ENCODE measurements at regions of chr14 and their contacts with region 1.

Region 1: DNA sequence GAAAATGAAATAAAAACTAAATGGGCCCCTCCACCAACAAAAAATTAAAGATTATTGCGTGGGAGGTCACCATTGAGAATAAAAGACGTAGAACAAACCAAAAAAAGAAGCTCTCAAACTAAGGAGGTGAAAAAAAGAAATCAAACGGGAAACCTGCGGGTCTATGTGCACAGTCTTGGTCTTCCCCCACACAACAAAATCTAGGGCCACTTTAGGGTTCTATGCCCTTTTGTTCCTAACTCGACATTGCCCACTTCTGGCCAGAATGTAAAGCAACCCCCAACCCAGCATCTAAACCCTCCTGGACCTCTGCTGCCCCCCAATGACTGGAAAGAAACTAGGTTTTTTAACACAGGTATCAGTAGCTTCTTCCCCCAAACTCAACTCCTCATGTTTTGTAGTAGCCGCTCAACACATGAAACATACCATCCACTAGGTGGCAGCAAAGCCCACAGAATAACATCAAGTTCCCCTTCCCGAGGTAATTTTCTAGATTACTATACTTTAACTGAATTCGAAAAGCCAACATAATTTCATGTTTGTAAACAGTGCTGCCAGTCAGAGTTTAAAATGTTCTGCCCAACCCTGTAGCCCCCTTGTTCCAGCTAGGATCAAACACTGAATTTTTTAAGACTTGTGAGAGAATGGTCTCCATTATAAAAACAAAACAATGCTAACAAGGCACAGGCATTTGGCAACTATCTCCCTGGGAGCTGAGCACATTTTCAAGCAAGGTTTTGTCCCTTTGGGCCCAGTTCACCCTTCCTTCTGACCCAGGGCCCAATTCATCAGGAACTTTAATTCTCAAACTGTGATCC is 18.7 kb downstream of the DAD1 start:
- DNase-seq: no peak
- H3K4me3 ChIP-seq: peak overlapping the region in 5 of 8 donors; percentile 4 to 41 (median 15)
- H3K27ac ChIP-seq: peak overlapping the region in 7 of 8 donors; percentile 57 to 96 (median 87)
- H3K4me1 ChIP-seq: peaks cover 19 to 88% (median 59%) of the 10 kb centered on the region in 6 donors
- H3K27me3 ChIP-seq: no peaks in the 10 kb centered on the region
- CTCF ChIP-seq: peak; percentile 90 to 100 (median 95)
- POLR2A ChIP-seq: no peak

Region 2: GRCh38 chr14:22653012-22653621 is 82.8 kb after region 1 on chr14:
- intact Hi-C with region 1: loop called (anchors 2 kb)
- DNase-seq: no peak
- H3K4me3 ChIP-seq: no peak overlapping the region
- H3K27ac ChIP-seq: no peak overlapping the region
- H3K4me1 ChIP-seq: peaks cover 0 to 4% (median 0%) of the 10 kb centered on the region in 6 donors
- H3K27me3 ChIP-seq: no peaks in the 10 kb centered on the region
- CTCF ChIP-seq: peak; percentile 51 to 84 (median 77)
- POLR2A ChIP-seq: no peak

Measured in spleen (tissue), 13 donors.